Activated naive CD4-positive, alpha-beta T cell treated with anti-CD3 and anti-CD28 coated beads for 36 hours (primary cell): ENCODE measurements at regions of chr15 and their contacts with region 1.

Region 1: DNA sequence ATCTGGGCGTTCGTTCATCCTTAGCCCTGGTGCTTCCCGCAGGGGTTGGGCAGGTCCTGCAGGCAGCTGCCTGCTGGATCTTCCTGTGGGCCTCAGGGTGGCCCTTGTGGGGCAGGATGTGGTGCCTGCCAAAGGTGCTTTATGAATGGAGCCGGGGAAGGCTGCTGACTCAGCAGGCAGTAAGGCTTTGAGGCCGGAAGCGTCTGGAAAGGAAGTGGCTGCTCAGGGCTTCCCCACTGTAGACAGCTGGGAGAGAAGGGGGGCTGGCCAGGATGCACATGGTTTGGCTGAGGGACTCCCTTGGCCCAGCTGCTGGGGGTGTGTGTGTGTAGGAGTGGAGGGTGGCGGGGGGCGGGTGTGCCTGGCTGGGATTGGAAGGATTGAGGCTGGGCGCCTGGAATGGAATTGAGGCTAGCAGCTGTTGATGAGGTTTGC is 12.9 kb downstream of the CD276 start:
- DNase-seq: peak; percentile 95
- H3K4me3 Mint-ChIP-seq: peak overlapping the region; percentile 9
- H3K27ac Mint-ChIP-seq: peak overlapping the region; percentile 35
- H3K4me1 Mint-ChIP-seq: peaks cover 24% of the 10 kb centered on the region
- H3K27me3 Mint-ChIP-seq: peaks cover 60% of the 10 kb centered on the region

Region 2: GRCh38 chr15:73240866-73241499 is 456.1 kb before region 1 on chr15:
- CTCF ChIA-PET with region 1: interaction called, 6 read pairs
- intact Hi-C with region 1: loop called (anchors 1 kb)
- DNase-seq: peak; percentile 89
- H3K4me3 Mint-ChIP-seq: no peak overlapping the region
- H3K27ac Mint-ChIP-seq: no peak overlapping the region
- H3K4me1 Mint-ChIP-seq: no peaks in the 10 kb centered on the region
- H3K27me3 Mint-ChIP-seq: no peaks in the 10 kb centered on the region

Region 3: GRCh38 chr15:73346735-73347312 is 350.2 kb before region 1 on chr15:
- CTCF ChIA-PET with region 1: no interaction called
- intact Hi-C with region 1: no loop called
- DNase-seq: peak; percentile 77
- H3K4me3 Mint-ChIP-seq: no peak overlapping the region
- H3K27ac Mint-ChIP-seq: no peak overlapping the region
- H3K4me1 Mint-ChIP-seq: no peaks in the 10 kb centered on the region
- H3K27me3 Mint-ChIP-seq: peaks cover 5% of the 10 kb centered on the region

Region 4: GRCh38 chr15:73464602-73465001 is 232.4 kb before region 1 on chr15:
- CTCF ChIA-PET with region 1: no interaction called
- intact Hi-C with region 1: no loop called
- DNase-seq: no peak
- H3K4me3 Mint-ChIP-seq: no peak overlapping the region
- H3K27ac Mint-ChIP-seq: no peak overlapping the region
- H3K4me1 Mint-ChIP-seq: no peaks in the 10 kb centered on the region
- H3K27me3 Mint-ChIP-seq: peaks cover 5% of the 10 kb centered on the region

Region 5: DNA sequence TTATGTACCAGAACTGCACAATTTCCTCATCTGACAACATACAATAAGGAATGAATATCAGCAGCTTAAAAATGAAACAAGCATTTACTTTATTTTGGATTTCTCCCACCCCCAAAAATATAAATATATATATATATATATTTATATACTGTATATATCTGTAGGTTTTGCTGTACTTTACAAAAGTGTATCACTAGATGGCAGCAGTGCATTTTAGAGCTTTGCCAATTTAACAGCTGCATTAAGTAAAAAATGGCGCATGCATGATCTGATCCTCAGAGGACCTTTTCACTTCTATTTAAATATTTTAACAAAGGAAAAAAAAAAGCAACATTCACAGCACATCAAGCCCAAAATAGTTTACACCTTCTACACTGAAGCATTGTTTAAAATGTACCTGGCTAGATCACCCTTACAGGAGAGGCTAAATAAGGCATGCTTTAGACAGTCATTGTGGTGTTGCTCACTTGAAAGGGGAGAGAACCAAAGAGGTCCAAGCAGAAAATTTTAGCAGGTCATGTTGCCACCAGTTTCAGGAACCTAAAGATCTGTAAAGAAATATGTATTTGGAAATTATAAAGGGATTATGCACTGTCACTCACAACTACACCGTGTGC is 136.4 kb before region 1 on chr15:
- CTCF ChIA-PET with region 1: interaction called, 17 read pairs
- intact Hi-C with region 1: loop called (anchors 1 kb)
- DNase-seq: peak; percentile 21
- H3K4me3 Mint-ChIP-seq: no peak overlapping the region
- H3K27ac Mint-ChIP-seq: no peak overlapping the region
- H3K4me1 Mint-ChIP-seq: no peaks in the 10 kb centered on the region
- H3K27me3 Mint-ChIP-seq: no peaks in the 10 kb centered on the region

Region 6: DNA sequence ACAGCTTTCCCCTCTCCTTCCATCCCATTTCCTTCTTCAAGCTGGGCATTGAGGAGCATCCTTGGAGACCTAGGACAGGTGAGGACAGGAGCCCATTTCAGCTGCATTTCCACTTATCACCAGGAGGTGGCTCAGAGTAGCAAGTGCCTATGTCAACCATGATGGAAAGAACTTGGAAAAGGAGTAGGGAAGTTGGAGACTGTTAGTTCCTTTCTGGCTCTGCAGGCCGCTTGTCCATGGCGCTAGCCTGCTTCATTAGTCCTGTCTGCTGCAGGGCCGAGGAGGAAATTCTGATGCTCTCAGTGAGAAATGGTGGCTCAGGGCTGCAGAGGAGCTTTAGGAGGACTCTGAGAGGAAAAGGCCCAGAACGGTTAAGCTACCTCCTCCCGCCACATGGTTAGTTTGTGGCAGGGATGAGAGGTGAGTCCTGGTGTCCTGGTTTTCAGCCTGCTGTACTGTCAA is 19.9 kb before region 1 on chr15:
- CTCF ChIA-PET with region 1: interaction called, 113 read pairs
- intact Hi-C with region 1: loop called (anchors 1 kb)
- DNase-seq: peak; percentile 68
- H3K4me3 Mint-ChIP-seq: no peak overlapping the region
- H3K27ac Mint-ChIP-seq: no peak overlapping the region
- H3K4me1 Mint-ChIP-seq: peaks cover 6% of the 10 kb centered on the region
- H3K27me3 Mint-ChIP-seq: peaks cover 14% of the 10 kb centered on the region